WTC11 (cell line): ENCODE measurements at regions of chr9 and their contacts with region 1.

Region 1: GRCh38 chr9:124771021-124771866 is at the start of gene NR6A1:
- DNase-seq: peak; percentile 98
- ATAC-seq: peak; percentile 81
- H3K4me3 Mint-ChIP-seq: peak within 1 kb of the TSS; percentile 85
- H3K27ac Mint-ChIP-seq: peak within 1 kb of the TSS; percentile 98
- H3K4me1 Mint-ChIP-seq: peaks cover 42% of the 10 kb centered on the region
- H3K27me3 Mint-ChIP-seq: peaks cover 11% of the 10 kb centered on the region
- CTCF ChIP-seq: no peak
- total RNA-seq, gene NR6A1: 164 to 222 TPM (median 218 TPM) in 3 replicates

Region 2: GRCh38 chr9:124758061-124758460 is 13.2 kb before region 1 on chr9:
- CTCF ChIA-PET with region 1: interaction called, 12 read pairs
- POLR2A ChIA-PET with region 1: interaction called, 3 read pairs
- DNase-seq: no peak
- ATAC-seq: peak; percentile 35
- H3K4me3 Mint-ChIP-seq: peak overlapping the region; percentile 65
- H3K27ac Mint-ChIP-seq: peak overlapping the region; percentile 98
- H3K4me1 Mint-ChIP-seq: peaks cover 92% of the 10 kb centered on the region
- H3K27me3 Mint-ChIP-seq: no peaks in the 10 kb centered on the region
- CTCF ChIP-seq: no peak

Region 3: DNA sequence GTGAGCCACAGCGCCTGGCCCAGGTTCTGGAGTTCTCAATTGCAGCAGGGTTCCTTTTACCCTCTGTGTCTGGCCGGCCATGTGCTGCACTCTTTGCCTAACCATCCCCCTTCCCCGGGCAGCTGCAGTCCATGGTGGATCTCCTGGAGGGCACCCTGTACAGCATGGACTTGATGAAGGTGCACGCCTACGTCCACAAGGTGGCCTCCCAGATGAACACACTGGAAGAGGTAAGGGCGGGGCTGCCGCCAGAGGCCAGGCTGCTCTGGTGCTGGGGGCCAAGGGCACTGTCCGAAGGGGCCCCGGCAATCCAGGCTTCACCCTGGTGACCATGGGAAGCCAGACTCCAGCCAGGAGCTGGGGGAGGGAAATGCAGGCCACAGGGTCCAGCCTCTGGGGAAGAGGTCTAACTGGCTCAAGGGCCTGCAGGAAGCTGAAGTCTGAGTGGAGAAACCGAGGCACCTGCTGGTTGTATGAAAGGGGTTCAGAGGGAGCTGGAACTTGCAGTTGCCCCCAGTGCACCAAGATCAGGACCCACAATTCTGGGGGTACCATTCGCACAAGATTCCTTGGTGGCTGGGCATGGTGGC is 23.8 kb after region 1 on chr9:
- CTCF ChIA-PET with region 1: interaction called, 33 read pairs
- POLR2A ChIA-PET with region 1: no interaction called
- DNase-seq: no peak
- ATAC-seq: peak; percentile 35; the same call in 1 of the 2 replicates
- H3K4me3 Mint-ChIP-seq: no peak overlapping the region
- H3K27ac Mint-ChIP-seq: no peak overlapping the region
- H3K4me1 Mint-ChIP-seq: 0 out of 2 replicates have a peak, but pooled peaks cover 4% of the 10 kb centered on the region
- H3K27me3 Mint-ChIP-seq: no peaks in the 10 kb centered on the region
- CTCF ChIP-seq: no peak

Region 4: DNA sequence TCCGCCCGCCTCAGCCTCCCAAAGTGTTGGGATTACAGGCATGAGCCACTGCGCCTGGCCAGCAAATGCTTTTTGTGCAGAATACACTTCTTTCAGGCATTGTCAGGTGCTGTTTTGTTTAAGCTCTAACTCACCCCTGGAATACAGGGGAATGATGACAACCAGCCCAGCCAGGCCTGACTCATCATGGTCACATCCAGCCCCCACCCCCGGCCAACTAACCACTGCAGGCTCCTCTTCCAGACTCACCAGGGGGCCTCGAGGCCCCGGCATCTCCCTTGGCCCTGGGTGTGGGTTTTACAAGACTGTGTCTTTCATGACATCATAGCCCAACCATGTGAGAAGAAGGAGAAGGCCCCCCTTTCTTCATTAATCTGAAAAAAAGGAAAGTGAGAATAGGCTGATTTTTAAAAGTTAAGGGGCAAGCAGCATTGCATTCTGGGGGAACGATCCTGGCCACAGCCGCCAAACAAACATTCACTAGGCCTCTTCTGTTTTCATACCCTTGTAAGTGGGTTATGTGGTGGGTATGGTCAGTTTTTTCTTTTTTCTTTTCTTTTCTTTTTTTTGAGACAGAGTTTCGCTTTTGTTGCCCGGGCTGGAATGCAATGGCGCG is 41.3 kb after region 1 on chr9:
- CTCF ChIA-PET with region 1: interaction called, 147 read pairs
- POLR2A ChIA-PET with region 1: no interaction called
- DNase-seq: no peak
- ATAC-seq: no peak
- H3K4me3 Mint-ChIP-seq: no peak overlapping the region
- H3K27ac Mint-ChIP-seq: no peak overlapping the region
- H3K4me1 Mint-ChIP-seq: peaks cover 36% of the 10 kb centered on the region
- H3K27me3 Mint-ChIP-seq: no peaks in the 10 kb centered on the region
- CTCF ChIP-seq: no peak

Region 5: DNA sequence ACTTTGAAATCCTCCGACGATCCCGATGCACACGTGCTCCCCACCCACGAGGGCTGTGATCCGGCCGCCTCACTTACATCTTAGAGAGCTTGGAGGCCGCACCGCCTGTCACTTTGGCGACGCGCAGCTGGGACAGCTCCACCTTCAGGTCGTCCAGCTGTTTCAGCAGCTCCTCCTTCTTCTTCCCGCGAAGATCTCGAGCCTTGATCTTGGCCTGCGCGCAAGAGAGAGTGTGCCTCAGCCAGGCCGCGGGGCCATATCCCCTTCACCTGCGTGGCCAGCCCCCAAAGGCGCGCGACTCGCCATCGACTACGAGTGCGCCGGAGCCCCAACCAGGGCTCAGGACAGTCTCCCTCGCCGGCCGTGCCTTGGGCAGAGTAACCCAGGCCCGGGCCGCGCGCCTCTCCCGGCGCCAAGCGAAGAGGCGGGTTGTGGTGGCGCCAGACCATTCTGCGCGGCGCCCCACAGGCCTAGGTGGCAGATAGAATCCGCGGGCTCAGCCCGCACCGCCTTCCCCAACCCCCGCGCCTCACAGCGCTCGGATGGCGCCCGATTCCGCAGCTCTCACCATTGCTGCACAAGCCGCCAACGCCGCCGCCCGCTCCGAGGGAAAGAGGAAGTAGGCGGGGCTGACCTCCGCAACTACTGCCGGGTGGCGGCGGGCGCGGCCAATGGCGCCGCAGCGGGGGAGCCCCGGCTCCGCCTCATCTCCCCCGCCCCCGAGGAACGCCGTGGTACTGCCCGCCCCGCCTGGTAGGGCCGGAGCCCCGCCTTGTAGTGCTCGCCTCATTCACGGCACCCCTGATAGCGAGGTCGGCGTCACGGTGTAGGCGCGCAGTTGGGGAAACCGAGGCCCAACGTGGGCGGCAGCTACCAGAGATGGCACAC is 90.3 kb after region 1 on chr9 and contains the starts of genes ARPC5L and RPL35:
- CTCF ChIA-PET with region 1: interaction called, 935 read pairs
- POLR2A ChIA-PET with region 1: interaction called, 14 read pairs
- DNase-seq: peak; percentile 95
- ATAC-seq: peak; percentile 89
- H3K4me3 Mint-ChIP-seq: peak within 1 kb of the TSS; percentile 91
- H3K27ac Mint-ChIP-seq: peak within 1 kb of the TSS; percentile 96
- H3K4me1 Mint-ChIP-seq: peaks cover 14% of the 10 kb centered on the region
- H3K27me3 Mint-ChIP-seq: no peaks in the 10 kb centered on the region
- CTCF ChIP-seq: no peak
- total RNA-seq, gene ARPC5L: 40.0 to 47.2 TPM (median 40.5 TPM) in 3 replicates
- total RNA-seq, gene RPL35: 1,710 to 1,958 TPM (median 1,927 TPM) in 3 replicates